Endothelial cell of umbilical vein (primary cell): ENCODE measurements at regions of chr14 and their contacts with region 1.

Region 1: DNA sequence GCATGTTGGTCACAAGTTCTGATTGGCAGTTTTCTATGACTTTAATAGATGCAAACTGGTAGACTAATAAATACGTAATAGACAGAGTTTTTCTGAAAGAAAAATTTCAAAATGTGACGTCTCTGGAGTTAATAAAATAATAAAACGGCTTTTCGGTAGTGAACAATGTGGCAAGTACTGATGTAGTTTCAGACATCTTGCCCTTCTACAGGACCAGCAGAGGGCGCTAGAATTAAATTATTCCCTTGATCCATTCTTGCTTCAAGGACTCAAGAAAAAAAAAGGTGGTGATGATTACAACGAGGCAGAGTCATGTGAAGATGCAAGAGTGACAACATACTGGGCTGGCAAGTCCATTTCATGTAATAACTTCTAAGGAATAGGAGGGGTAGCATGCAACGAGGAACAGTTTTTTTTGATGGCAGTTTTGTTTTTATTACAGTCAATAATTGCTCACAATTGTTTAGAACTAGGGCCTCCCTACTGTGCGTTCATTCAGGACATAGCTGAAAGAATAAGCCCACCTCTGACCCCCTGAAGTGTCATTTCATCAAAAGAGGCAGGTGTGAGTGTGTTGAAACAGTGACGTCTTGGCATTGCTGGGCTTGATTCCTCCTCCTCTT is 101.0 kb upstream of the GZMB start:
- DNase-seq: peak; percentile 54
- H3K4me3 ChIP-seq: no peak overlapping the region
- H3K27ac ChIP-seq: no peak overlapping the region
- H3K4me1 ChIP-seq: no peaks in the 10 kb centered on the region
- H3K27me3 ChIP-seq: no peaks in the 10 kb centered on the region
- CTCF ChIP-seq: peak; percentile 51 to 57
- POLR2A ChIP-seq: no peak

Region 2: GRCh38 chr14:24774187-24774915 is 39.4 kb after region 1 on chr14:
- CTCF ChIA-PET with region 1: no interaction called
- POLR2A ChIA-PET with region 1: no interaction called
- dilution Hi-C with region 1: no loop called
- intact Hi-C with region 1: loop called (anchors 2 kb)
- DNase-seq: peak; percentile 88
- H3K4me3 ChIP-seq: no peak overlapping the region
- H3K27ac ChIP-seq: peak overlapping the region; percentile 44
- H3K4me1 ChIP-seq: peaks cover 17% of the 10 kb centered on the region
- H3K27me3 ChIP-seq: no peaks in the 10 kb centered on the region
- CTCF ChIP-seq: no peak
- POLR2A ChIP-seq: no peak

Region 3: GRCh38 chr14:24806061-24806678 is 71.2 kb after region 1 on chr14:
- CTCF ChIA-PET with region 1: interaction called, 14 read pairs
- POLR2A ChIA-PET with region 1: no interaction called
- dilution Hi-C with region 1: no loop called
- intact Hi-C with region 1: loop called (anchors 1 kb)
- DNase-seq: peak; percentile 51
- H3K4me3 ChIP-seq: no peak overlapping the region
- H3K27ac ChIP-seq: no peak overlapping the region
- H3K4me1 ChIP-seq: no peaks in the 10 kb centered on the region
- H3K27me3 ChIP-seq: peaks cover 2 to 4% of the 10 kb centered on the region in 2 experiments
- CTCF ChIP-seq: peak; percentile 72 to 80
- POLR2A ChIP-seq: no peak

Region 4: GRCh38 chr14:24870949-24871701 is 136.1 kb after region 1 on chr14:
- CTCF ChIA-PET with region 1: no interaction called
- POLR2A ChIA-PET with region 1: no interaction called
- dilution Hi-C with region 1: no loop called
- intact Hi-C with region 1: no loop called
- DNase-seq: no peak
- H3K4me3 ChIP-seq: no peak overlapping the region
- H3K27ac ChIP-seq: no peak overlapping the region
- H3K4me1 ChIP-seq: no peaks in the 10 kb centered on the region
- H3K27me3 ChIP-seq: no peaks in the 10 kb centered on the region
- CTCF ChIP-seq: no peak
- POLR2A ChIP-seq: no peak

Region 5: GRCh38 chr14:24911324-24912109 is 176.5 kb after region 1 on chr14:
- CTCF ChIA-PET with region 1: no interaction called
- POLR2A ChIA-PET with region 1: no interaction called
- dilution Hi-C with region 1: no loop called
- intact Hi-C with region 1: no loop called
- DNase-seq: no peak
- H3K4me3 ChIP-seq: no peak overlapping the region
- H3K27ac ChIP-seq: no peak overlapping the region
- H3K4me1 ChIP-seq: no peaks in the 10 kb centered on the region
- H3K27me3 ChIP-seq: no peaks in the 10 kb centered on the region
- CTCF ChIP-seq: no peak
- POLR2A ChIP-seq: no peak

Region 6: DNA sequence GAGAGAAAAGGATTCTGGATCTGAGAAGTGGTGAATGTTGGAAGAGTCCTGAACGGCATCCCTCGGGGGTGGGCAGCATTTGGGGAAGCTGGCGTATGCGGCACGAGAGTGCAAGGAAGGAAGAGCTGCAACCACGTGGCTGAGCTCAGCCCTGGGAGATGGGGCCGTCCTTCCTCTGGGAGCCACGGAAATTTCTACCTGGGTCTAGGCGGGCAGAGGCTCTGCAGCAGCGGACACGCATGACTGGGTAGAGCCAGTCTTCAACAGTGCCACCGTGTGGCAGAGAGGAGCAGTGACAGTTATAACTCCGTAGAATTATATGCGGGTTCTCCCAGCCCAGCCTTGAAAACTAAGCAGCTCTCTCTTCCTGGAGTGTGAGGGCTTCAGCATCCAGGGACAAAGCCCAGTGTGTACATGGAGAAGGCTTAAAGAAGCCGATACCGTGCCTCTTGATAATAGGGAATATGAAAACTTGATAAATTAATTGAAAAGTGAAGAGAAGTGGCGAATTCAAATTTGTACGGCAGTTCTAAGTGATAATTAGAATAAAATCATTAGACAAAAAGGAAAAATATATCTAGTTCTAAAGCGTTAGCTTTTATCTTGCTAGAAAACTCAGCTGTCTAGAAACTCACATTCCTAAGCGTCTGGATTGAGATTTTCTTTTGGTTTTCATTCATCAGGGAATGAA is 397.9 kb after region 1 on chr14:
- CTCF ChIA-PET with region 1: interaction called, 15 read pairs
- POLR2A ChIA-PET with region 1: no interaction called
- dilution Hi-C with region 1: no loop called
- intact Hi-C with region 1: loop called (anchors 1 kb)
- DNase-seq: peak; percentile 39
- H3K4me3 ChIP-seq: no peak overlapping the region
- H3K27ac ChIP-seq: no peak overlapping the region
- H3K4me1 ChIP-seq: no peaks in the 10 kb centered on the region
- H3K27me3 ChIP-seq: peaks cover 0 to 4% of the 10 kb centered on the region in 2 experiments
- CTCF ChIP-seq: peak; percentile 74 to 81
- POLR2A ChIP-seq: no peak

Region 7: GRCh38 chr14:25406818-25407217 is 671.8 kb after region 1 on chr14:
- CTCF ChIA-PET with region 1: interaction called, 4 read pairs
- POLR2A ChIA-PET with region 1: no interaction called
- dilution Hi-C with region 1: no loop called
- intact Hi-C with region 1: loop called (anchors 1 kb)
- DNase-seq: peak; percentile 48
- H3K4me3 ChIP-seq: no peak overlapping the region
- H3K27ac ChIP-seq: no peak overlapping the region
- H3K4me1 ChIP-seq: no peaks in the 10 kb centered on the region
- H3K27me3 ChIP-seq: no peaks in the 10 kb centered on the region
- CTCF ChIP-seq: peak; percentile 59 to 63
- POLR2A ChIP-seq: no peak